HCT116 (cell line): ENCODE measurements at regions of chr17 and their contacts with region 1.

Region 1: GRCh38 chr17:409848-410545 is 57.4 kb upstream of the RPH3AL start:
- DNase-seq: peak; percentile 97
- ATAC-seq: peak; percentile 88
- H3K4me3 ChIP-seq: peak overlapping the region; percentile 82 to 83
- H3K27ac ChIP-seq: peak overlapping the region; percentile 55
- H3K4me1 ChIP-seq: peaks cover 6 to 19% of the 10 kb centered on the region in 2 experiments; a peak in 3 of 4 replicates
- H3K27me3 ChIP-seq: no peaks in the 10 kb centered on the region
- CTCF ChIP-seq: no peak
- POLR2A ChIP-seq: peak; percentile 77
- RAD21 ChIP-seq: no peak

Region 2: GRCh38 chr17:376936-377863 is 32.8 kb before region 1 on chr17:
- CTCF ChIA-PET with region 1: no interaction called
- POLR2A ChIA-PET with region 1: no interaction called
- RAD21 ChIA-PET with region 1: no interaction called
- intact Hi-C with region 1: no loop called
- DNase-seq: no peak
- ATAC-seq: no peak
- H3K4me3 ChIP-seq: no peak overlapping the region
- H3K27ac ChIP-seq: no peak overlapping the region
- H3K4me1 ChIP-seq: peaks cover 3 to 7% of the 10 kb centered on the region in 2 experiments; a peak in 1 of 4 replicates
- H3K27me3 ChIP-seq: no peaks in the 10 kb centered on the region
- CTCF ChIP-seq: no peak
- POLR2A ChIP-seq: no peak
- RAD21 ChIP-seq: no peak

Region 3: DNA sequence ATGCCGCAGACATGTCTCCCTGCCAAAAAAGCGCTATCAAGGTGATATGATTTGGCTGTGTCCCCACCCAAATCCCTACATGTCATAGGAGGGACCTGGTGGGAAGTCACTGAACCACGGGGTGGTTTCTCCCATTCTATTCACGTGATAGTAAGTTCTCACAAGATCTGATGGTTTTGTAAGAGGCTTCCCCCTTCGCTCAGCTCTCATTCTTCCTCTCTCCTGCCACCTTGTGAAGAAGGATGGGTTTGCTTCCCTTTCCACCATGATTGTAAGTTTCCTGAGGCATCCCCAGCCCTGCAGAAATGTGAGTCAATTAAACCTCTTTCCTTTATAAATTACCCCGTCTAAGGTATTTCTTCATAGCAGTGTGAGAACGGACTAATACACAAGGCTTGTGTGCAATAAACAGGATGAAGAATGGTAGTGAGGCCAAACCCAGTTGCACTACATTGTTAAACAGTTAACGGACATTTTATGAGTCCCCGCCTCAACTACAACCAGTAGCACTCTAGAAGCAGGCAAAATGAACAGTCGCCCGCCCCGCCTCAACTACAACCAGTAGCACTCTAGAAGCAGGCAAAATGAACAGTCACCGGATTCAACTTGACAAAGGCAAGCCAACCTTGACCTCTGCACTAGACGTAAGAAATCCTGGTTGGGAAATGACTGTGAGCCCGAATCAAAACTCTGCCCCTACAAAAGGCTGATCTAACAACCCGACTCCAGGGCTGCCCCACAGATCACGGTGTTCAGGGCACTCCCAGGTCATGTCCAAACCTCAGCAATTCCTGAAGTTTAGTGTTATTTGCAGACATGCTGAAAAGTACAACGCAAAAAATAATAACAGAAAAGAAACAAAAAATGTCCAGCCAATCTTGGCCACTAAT is 278.3 kb after region 1 on chr17:
- CTCF ChIA-PET with region 1: interaction called, 5 read pairs
- POLR2A ChIA-PET with region 1: no interaction called
- RAD21 ChIA-PET with region 1: interaction called, 3 read pairs
- intact Hi-C with region 1: loop called (anchors 1 kb)
- DNase-seq: no peak
- ATAC-seq: no peak
- H3K4me3 ChIP-seq: no peak overlapping the region
- H3K27ac ChIP-seq: no peak overlapping the region
- H3K4me1 ChIP-seq: no peaks in the 10 kb centered on the region
- H3K27me3 ChIP-seq: no peaks in the 10 kb centered on the region
- CTCF ChIP-seq: peak; percentile 24 to 35 (median 26); a peak in 2 of 6 replicates
- POLR2A ChIP-seq: no peak
- RAD21 ChIP-seq: peak; percentile 59

Region 4: DNA sequence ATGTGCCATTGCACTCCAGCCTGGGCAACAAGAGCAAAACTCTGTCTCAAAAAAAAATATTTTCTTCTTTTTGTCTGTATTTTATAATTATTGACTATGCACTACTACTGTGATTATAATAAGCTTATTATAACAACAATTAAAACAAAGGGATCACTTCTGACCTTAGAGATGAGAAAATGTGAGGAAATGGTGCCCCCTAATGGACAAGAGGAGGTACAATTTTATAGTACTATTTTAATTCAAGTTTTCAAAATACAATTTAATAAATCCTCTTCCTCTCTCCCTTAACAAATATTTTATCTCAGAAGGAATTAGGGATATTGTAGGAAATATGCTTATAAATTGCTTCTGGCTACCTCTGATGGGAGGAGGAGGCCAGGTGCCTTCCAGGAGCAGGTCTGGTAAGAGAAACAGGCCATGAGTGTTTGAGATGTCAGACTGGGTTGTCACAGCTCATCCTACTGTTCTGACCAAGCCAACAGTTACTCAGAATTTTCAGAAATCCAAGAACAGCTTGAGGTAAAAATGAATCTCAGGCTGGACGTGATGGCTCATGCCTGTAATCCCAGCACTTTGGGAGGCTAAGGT is 290.6 kb after region 1 on chr17:
- CTCF ChIA-PET with region 1: interaction called, 124 read pairs
- POLR2A ChIA-PET with region 1: interaction called, 6 read pairs
- RAD21 ChIA-PET with region 1: interaction called, 12 to 14 read pairs
- intact Hi-C with region 1: loop called (anchors 1 kb)
- DNase-seq: peak; percentile 21
- ATAC-seq: peak; percentile 61
- H3K4me3 ChIP-seq: no peak overlapping the region
- H3K27ac ChIP-seq: no peak overlapping the region
- H3K4me1 ChIP-seq: no peaks in the 10 kb centered on the region
- H3K27me3 ChIP-seq: no peaks in the 10 kb centered on the region
- CTCF ChIP-seq: peak; percentile 32 to 82 (median 68)
- POLR2A ChIP-seq: no peak
- RAD21 ChIP-seq: peak; percentile 86

Region 5: GRCh38 chr17:996554-997344 is 586.8 kb after region 1 on chr17 and contains the start of gene TIMM22:
- CTCF ChIA-PET with region 1: interaction called, 10 read pairs
- POLR2A ChIA-PET with region 1: no interaction called
- RAD21 ChIA-PET with region 1: interaction called in 1 of 2 experiments, 6 read pairs
- intact Hi-C with region 1: loop called (anchors 5 kb)
- DNase-seq: peak; percentile 96
- ATAC-seq: peak; percentile 95
- H3K4me3 ChIP-seq: peak within 1 kb of the TSS; percentile 99 to 100
- H3K27ac ChIP-seq: peak within 1 kb of the TSS; percentile 58
- H3K4me1 ChIP-seq: peaks cover 8 to 19% of the 10 kb centered on the region in 2 experiments; a peak in 3 of 4 replicates
- H3K27me3 ChIP-seq: no peaks in the 10 kb centered on the region
- CTCF ChIP-seq: peak; percentile 88 to 93 (median 91); a peak in 5 of 6 replicates
- POLR2A ChIP-seq: peak; percentile 80
- RAD21 ChIP-seq: peak; percentile 98
- total RNA-seq, gene TIMM22: 14.0 TPM